ENCODE measurements at regions of chr1 and their contacts with region 1.

Region 1: DNA sequence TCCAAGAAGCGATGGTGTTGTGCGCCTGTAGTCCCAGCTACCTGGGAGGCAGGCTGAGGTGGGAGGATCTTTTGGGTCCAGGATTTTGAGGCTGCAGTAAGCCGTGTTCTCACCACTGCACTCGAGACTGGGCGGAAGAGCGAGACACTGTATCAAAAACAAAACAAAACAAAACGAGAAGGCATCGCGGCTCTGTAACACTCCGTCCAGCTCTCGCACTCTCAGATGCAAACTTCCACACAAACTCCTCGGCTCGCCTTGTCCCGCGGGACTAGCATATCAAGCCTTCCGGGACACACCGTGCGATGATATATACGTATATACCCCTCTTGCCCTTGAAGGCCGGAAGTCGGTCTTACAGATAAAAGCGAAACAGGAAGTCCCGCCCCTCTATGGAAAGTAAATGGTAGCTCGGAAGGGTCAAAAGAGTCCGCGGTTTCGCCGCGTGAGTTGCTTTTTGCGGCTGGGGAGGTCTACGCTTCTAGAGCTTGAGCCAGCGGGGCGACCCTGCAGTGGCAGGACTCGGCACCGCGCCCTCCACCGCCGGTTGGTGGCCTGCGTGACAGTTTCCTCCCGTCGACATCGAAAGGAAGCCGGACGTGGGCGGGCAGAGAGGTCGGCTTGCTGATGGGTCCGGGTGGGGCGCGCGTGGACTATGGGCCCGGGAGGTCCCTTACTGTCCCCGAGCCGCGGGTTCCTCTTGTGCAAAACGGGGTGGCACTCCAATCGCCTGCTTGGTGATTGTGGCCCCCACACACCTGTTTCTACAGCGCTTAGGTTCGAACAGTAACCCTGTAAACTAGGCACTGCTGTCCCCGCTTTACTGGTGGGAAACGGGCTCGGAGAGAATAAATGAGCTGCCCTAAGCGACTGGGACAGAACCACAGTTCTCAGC is at the start of gene COA6:
- DNase-seq: peak; percentile 90 to 93 (median 92)
- H3K4me3 ChIP-seq: peak within 1 kb of the TSS; percentile 73 to 99
- H3K4me3 Mint-ChIP-seq: peak within 1 kb of the TSS; percentile 93 to 100 (median 97)
- H3K27ac ChIP-seq: peak within 1 kb of the TSS; percentile 87
- H3K27ac Mint-ChIP-seq: peak within 1 kb of the TSS; percentile 97 to 99 (median 99)
- H3K4me1 ChIP-seq: peaks cover 46% of the 10 kb centered on the region
- H3K4me1 Mint-ChIP-seq: peaks cover 37 to 69% (median 48%) of the 10 kb centered on the region in 4 donors
- H3K27me3 ChIP-seq: no peaks in the 10 kb centered on the region
- H3K27me3 Mint-ChIP-seq: no peaks in the 10 kb centered on the region
- total RNA-seq, gene COA6: 18.5 to 21.8 TPM

Region 2: DNA sequence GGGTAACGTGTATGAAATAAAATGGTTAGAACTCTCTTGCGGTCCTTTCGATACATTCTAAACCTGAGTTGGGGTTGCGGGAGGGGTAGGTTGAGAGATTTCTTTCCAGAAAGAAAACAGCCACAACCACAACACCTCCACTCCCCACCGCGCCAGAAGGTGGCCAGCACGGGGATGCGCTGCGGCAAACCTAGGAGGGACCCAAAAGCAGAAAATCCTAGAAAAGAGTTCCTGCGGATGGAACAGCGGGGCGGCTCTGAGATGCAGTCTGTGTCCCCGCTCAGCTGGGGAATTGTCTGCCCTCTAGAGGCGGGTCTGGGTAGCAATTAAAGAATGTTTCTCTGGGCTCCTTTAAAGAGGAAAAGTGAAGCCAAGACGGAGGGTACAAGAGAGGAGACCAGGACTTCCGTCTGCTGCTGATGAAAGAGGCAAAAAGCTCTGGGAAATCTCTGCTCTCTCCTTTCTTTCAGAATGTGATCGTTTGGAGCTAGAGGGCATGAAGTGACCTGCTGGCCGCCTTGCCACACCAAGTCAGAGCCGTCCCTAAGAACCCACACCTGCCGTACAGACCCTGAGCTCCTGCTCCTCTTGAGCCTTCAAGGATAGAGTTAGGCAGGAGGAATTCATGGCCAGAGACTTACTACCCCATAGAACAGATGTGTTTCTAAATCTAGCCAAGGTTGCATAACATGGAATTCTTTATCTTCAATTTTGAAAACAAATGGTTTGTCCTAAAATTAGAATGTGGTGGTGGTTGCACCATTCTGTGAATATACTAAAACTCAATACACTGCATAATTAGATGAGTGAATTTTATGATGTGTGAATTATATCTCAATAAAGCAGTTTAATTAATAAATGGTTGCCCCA is 46.6 kb before region 1 on chr1:
- CTCF ChIA-PET with region 1: interaction called, 16 read pairs
- POLR2A ChIA-PET with region 1: interaction called, 12 read pairs
- intact Hi-C with region 1: loop called (anchors 1 kb)
- DNase-seq: peak; percentile 69 to 76 (median 70)
- H3K4me3 ChIP-seq: peak overlapping the region; percentile 20 to 71
- H3K4me3 Mint-ChIP-seq: peak overlapping the region; percentile 89 to 97 (median 92)
- H3K27ac ChIP-seq: peak overlapping the region; percentile 40
- H3K27ac Mint-ChIP-seq: peak overlapping the region; percentile 52 to 98 (median 85)
- H3K4me1 ChIP-seq: peaks cover 8% of the 10 kb centered on the region
- H3K4me1 Mint-ChIP-seq: peaks cover 7 to 33% (median 18%) of the 10 kb centered on the region in 4 donors
- H3K27me3 ChIP-seq: no peaks in the 10 kb centered on the region
- H3K27me3 Mint-ChIP-seq: peaks cover 1 to 26% of the 10 kb centered on the region in 2 donors

Region 3: GRCh38 chr1:234355782-234356510 is 17.4 kb before region 1 on chr1:
- CTCF ChIA-PET with region 1: interaction called, 4 read pairs
- POLR2A ChIA-PET with region 1: interaction called, 46 read pairs
- intact Hi-C with region 1: no loop called
- DNase-seq: no peak
- H3K4me3 ChIP-seq: no peak overlapping the region
- H3K4me3 Mint-ChIP-seq: peak overlapping the region in 5 of 8 donors; percentile 37 to 90 (median 82)
- H3K27ac ChIP-seq: no peak overlapping the region
- H3K27ac Mint-ChIP-seq: peak overlapping the region in 3 of 7 donors; percentile 73 to 92 (median 83)
- H3K4me1 ChIP-seq: peaks cover 14% of the 10 kb centered on the region
- H3K4me1 Mint-ChIP-seq: peaks cover 0 to 12% (median 2%) of the 10 kb centered on the region in 4 donors
- H3K27me3 ChIP-seq: no peaks in the 10 kb centered on the region
- H3K27me3 Mint-ChIP-seq: peaks cover 0 to 6% of the 10 kb centered on the region in 2 donors

Region 4: DNA sequence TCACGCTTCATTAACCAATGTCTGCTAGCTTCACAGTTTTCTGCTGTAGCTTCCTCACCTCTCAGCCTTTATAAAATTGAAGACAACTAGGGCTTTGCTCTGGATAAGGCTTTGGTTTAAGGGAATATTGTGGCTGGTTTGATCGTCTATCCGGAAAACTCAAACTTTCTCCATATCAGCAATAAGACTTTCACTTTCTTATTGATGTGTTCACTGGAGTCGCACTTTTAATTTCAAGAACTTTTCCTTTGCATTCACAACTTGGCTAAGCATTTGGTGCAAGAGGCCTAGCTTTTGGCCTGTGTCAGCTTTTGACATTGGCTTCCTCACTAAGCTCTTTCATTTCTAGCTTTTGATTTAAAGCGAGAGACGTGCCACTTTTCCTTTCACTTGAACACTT is 12.8 kb after region 1 on chr1:
- CTCF ChIA-PET with region 1: interaction called, 3 read pairs
- POLR2A ChIA-PET with region 1: interaction called, 17 read pairs
- intact Hi-C with region 1: no loop called
- DNase-seq: no peak
- H3K4me3 ChIP-seq: no peak overlapping the region
- H3K4me3 Mint-ChIP-seq: peak overlapping the region; percentile 7 to 70 (median 52)
- H3K27ac ChIP-seq: no peak overlapping the region
- H3K27ac Mint-ChIP-seq: peak overlapping the region; percentile 44 to 93 (median 76)
- H3K4me1 ChIP-seq: no peaks in the 10 kb centered on the region
- H3K4me1 Mint-ChIP-seq: peaks cover 14 to 23% (median 17%) of the 10 kb centered on the region in 4 donors
- H3K27me3 ChIP-seq: no peaks in the 10 kb centered on the region
- H3K27me3 Mint-ChIP-seq: no peaks in the 10 kb centered on the region

Region 5: GRCh38 chr1:234398849-234399381 is 25.6 kb after region 1 on chr1:
- CTCF ChIA-PET with region 1: interaction called, 7 read pairs
- POLR2A ChIA-PET with region 1: interaction called, 101 read pairs
- intact Hi-C with region 1: loop called (anchors 1 kb)
- DNase-seq: no peak
- H3K4me3 ChIP-seq: peak overlapping the region in 1 of 2 donors; percentile 48
- H3K4me3 Mint-ChIP-seq: peak overlapping the region; percentile 68 to 94 (median 82)
- H3K27ac ChIP-seq: peak overlapping the region; percentile 22
- H3K27ac Mint-ChIP-seq: peak overlapping the region; percentile 3 to 94 (median 84)
- H3K4me1 ChIP-seq: peaks cover 35% of the 10 kb centered on the region
- H3K4me1 Mint-ChIP-seq: peaks cover 39 to 55% (median 50%) of the 10 kb centered on the region in 4 donors
- H3K27me3 ChIP-seq: no peaks in the 10 kb centered on the region
- H3K27me3 Mint-ChIP-seq: no peaks in the 10 kb centered on the region

Region 6: GRCh38 chr1:234409328-234409727 is 36.0 kb after region 1 on chr1:
- CTCF ChIA-PET with region 1: interaction called, 17 read pairs
- POLR2A ChIA-PET with region 1: interaction called, 101 read pairs
- intact Hi-C with region 1: loop called (anchors 1 kb)
- DNase-seq: peak; percentile 48 to 74 (median 65)
- H3K4me3 ChIP-seq: peak overlapping the region in 1 of 2 donors; percentile 22
- H3K4me3 Mint-ChIP-seq: peak overlapping the region; percentile 68 to 91 (median 83)
- H3K27ac ChIP-seq: peak overlapping the region; percentile 62
- H3K27ac Mint-ChIP-seq: peak overlapping the region; percentile 79 to 99 (median 96)
- H3K4me1 ChIP-seq: peaks cover 18% of the 10 kb centered on the region
- H3K4me1 Mint-ChIP-seq: peaks cover 9 to 30% (median 17%) of the 10 kb centered on the region in 4 donors
- H3K27me3 ChIP-seq: no peaks in the 10 kb centered on the region
- H3K27me3 Mint-ChIP-seq: no peaks in the 10 kb centered on the region

Region 7: GRCh38 chr1:234433563-234434285 is 60.4 kb after region 1 on chr1:
- CTCF ChIA-PET with region 1: no interaction called
- POLR2A ChIA-PET with region 1: no interaction called
- intact Hi-C with region 1: no loop called
- DNase-seq: no peak
- H3K4me3 ChIP-seq: no peak overlapping the region
- H3K4me3 Mint-ChIP-seq: no peak overlapping the region
- H3K27ac ChIP-seq: no peak overlapping the region
- H3K27ac Mint-ChIP-seq: no peak overlapping the region
- H3K4me1 ChIP-seq: no peaks in the 10 kb centered on the region
- H3K4me1 Mint-ChIP-seq: peaks cover 0 to 2% (median under 1%) of the 10 kb centered on the region in 4 donors
- H3K27me3 ChIP-seq: no peaks in the 10 kb centered on the region
- H3K27me3 Mint-ChIP-seq: no peaks in the 10 kb centered on the region

Region 8: GRCh38 chr1:234478481-234479309 is 105.4 kb after region 1 on chr1 and contains the start of gene TARBP1:
- CTCF ChIA-PET with region 1: interaction called, 3 read pairs
- POLR2A ChIA-PET with region 1: interaction called, 35 read pairs
- intact Hi-C with region 1: no loop called
- DNase-seq: peak; percentile 73 to 83 (median 82)
- H3K4me3 ChIP-seq: peak within 1 kb of the TSS; percentile 47 to 63
- H3K4me3 Mint-ChIP-seq: peak within 1 kb of the TSS; percentile 87 to 93 (median 90)
- H3K27ac ChIP-seq: peak within 1 kb of the TSS; percentile 42
- H3K27ac Mint-ChIP-seq: peak within 1 kb of the TSS; percentile 57 to 96 (median 89)
- H3K4me1 ChIP-seq: peaks cover 29% of the 10 kb centered on the region
- H3K4me1 Mint-ChIP-seq: peaks cover 15 to 44% (median 27%) of the 10 kb centered on the region in 4 donors
- H3K27me3 ChIP-seq: no peaks in the 10 kb centered on the region
- H3K27me3 Mint-ChIP-seq: peaks cover 5 to 9% of the 10 kb centered on the region in 2 donors
- total RNA-seq, gene TARBP1: 25.8 to 27.5 TPM